ENCODE measurements at regions of chr3 and their contacts with region 1.

Region 1: GRCh38 chr3:196684548-196685407 is 27.3 kb downstream of the CEP19 start:
- DNase-seq: peak; percentile 61
- H3K4me3 Mint-ChIP-seq: peak overlapping the region; percentile 40
- H3K27ac Mint-ChIP-seq: peak overlapping the region; percentile 47
- H3K4me1 Mint-ChIP-seq: peaks cover 30% of the 10 kb centered on the region
- H3K27me3 Mint-ChIP-seq: no peaks in the 10 kb centered on the region

Region 2: DNA sequence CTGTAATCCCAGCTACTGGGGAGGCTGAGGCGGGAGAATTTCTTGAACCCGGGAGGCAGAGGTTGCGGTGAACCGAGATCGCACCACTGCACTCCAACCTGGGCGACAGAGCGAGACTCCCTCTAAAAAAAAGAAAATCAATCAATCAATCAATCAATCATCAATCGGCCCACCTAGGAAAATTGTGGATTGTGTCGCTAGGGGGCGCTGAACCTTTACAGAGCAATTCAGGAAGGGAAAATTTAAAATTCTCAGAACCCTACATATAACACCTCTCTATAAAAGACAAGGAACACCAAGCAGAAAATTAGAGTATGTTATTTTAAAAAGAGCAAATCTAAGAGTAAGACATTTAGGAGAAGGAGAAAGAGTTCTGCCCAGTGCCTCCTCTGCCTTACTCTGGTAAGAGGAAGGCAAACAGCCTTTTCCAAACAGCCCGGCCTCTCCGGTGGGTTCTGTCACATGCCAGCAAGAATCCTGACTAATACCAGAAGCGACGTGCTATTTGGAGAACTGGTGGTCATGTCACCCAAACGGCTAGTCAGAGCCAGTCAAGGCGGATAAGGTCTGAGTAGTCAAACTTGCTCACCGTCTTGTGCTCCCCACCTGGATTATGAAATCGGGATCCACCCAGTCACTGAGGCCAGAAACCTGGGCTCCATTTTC is 147.3 kb before region 1 on chr3:
- intact Hi-C with region 1: loop called (anchors 2 kb)
- DNase-seq: peak; percentile 40
- H3K4me3 Mint-ChIP-seq: no peak overlapping the region
- H3K27ac Mint-ChIP-seq: no peak overlapping the region
- H3K4me1 Mint-ChIP-seq: peaks cover 9% of the 10 kb centered on the region
- H3K27me3 Mint-ChIP-seq: no peaks in the 10 kb centered on the region

Region 3: DNA sequence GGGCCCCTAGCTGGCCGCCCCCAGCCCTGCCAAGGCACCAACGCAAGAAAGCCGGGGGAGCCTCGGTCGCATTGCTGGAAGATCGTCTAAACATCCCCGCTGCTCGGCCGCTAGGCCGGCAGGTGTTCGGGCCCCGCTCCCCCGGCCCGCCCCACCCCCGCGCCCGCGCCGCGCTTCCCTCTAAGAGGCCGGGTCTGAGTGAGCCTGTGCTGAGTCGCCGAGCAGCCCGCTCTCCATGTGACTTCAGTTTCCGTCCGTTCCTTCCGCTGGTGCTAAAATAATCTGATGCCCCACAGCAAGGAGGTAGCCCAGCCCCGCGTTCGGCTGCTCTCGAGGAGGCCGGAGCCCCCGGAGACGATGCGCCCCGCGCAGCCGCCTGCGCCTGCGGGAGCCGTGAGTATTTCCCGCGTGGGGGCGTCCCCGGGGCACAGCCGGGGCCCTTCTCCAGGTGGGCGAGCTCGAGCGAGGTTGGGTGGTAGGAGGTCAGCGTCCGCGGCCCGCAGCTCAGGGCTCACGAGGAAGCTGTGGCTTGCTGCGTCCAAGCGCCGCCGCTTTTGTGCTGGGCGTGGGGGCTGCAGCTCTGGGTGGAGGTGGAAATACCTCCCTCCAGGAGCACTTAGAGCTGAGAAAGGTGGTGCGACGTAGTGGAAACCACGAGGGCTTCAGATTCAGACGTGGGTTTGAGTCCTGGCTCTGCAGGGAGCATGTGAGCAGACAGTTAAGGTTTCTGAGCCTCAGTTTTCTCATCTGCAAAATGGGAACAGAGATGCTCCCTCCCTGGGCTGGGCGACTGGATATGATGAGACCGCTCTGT is 45.1 kb before region 1 on chr3 and contains the start of gene NRROS:
- intact Hi-C with region 1: loop called (anchors 2 kb)
- DNase-seq: peak; percentile 71
- H3K4me3 Mint-ChIP-seq: peak within 1 kb of the TSS; percentile 96
- H3K27ac Mint-ChIP-seq: peak within 1 kb of the TSS; percentile 99
- H3K4me1 Mint-ChIP-seq: peaks cover 57% of the 10 kb centered on the region
- H3K27me3 Mint-ChIP-seq: no peaks in the 10 kb centered on the region
- total RNA-seq, gene NRROS: 51.4 and 53.2 TPM in 2 replicates

Region 4: GRCh38 chr3:196735751-196736150 is 51.0 kb after region 1 on chr3:
- intact Hi-C with region 1: no loop called
- DNase-seq: no peak
- H3K4me3 Mint-ChIP-seq: no peak overlapping the region
- H3K27ac Mint-ChIP-seq: no peak overlapping the region
- H3K4me1 Mint-ChIP-seq: peaks cover 16% of the 10 kb centered on the region
- H3K27me3 Mint-ChIP-seq: no peaks in the 10 kb centered on the region